ENCODE measurements at regions of chr13 and their contacts with region 1.

Region 1: GRCh38 chr13:40789275-40790133 is at the start of gene SLC25A15:
- DNase-seq: peak; percentile 47 to 82 (median 72)
- ATAC-seq: peak; percentile 86 to 92
- H3K4me3 Mint-ChIP-seq: peak within 1 kb of the TSS; percentile 55 to 90 (median 85)
- H3K27ac Mint-ChIP-seq: peak within 1 kb of the TSS; percentile 40 to 95 (median 88)
- H3K4me1 Mint-ChIP-seq: peaks cover 6 to 51% (median 36%) of the 10 kb centered on the region in 4 donors
- H3K27me3 Mint-ChIP-seq: no peaks in the 10 kb centered on the region
- polyA plus RNA-seq, gene SLC25A15: 5.3 to 12.1 (median 10.2) TPM

Region 2: DNA sequence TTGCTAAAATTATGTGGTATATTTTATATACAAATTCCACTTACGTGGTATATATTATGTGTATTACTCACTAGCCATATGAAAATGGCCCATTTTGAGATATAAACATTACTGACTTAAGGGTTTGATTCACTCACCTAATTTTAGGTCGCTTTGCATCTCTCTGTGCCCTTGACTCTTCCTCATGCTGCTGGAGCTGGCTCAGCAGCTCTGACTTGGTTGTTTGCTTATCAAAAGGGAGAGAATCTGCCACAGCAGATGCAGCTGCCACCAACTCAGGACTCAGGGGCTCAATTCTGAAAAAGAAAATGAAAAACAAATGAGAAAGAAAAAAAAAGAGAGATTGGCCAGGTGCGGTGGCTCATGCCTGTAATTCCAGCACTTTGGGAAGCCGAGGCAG is 30.7 kb before region 1 on chr13:
- POLR2A ChIA-PET with region 1: no interaction called
- DNase-seq: no peak
- ATAC-seq: no peak
- H3K4me3 Mint-ChIP-seq: no peak overlapping the region
- H3K27ac Mint-ChIP-seq: no peak overlapping the region
- H3K4me1 Mint-ChIP-seq: peaks cover 9 to 27% (median 17%) of the 10 kb centered on the region in 4 donors
- H3K27me3 Mint-ChIP-seq: no peaks in the 10 kb centered on the region

Region 3: DNA sequence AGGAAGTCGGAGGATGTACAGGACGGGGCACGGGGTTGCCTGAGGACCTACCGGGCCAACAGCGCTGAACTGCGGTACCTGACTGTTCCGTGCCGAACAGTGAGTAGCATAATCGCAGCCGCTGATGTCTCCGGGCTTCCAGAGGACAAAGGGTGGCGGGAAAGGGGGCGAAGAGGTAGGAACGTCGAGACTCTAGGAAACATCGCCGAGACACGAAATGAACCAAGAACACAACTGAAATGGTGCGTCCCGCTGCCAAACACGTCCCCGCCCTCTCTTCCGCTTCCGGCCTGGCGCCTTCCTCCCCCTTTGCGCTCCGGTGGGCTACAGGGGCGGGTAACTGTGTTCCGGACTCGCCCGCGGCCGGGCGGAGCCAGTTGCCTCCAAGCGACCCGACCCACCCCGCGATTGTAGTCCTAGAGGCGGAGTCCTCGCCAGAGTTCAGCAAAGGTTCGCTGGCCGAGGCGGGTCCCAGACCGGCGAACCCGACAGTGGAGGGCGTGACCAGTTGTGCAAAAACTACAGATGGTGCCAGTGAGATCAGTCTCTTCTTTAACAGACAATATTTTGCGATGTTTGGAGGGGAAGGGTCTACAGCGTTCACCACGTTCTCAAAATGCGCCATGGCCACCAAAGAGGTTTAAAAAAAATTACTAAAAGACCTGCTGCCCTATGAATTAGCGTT is 18.4 kb before region 1 on chr13 and contains the start of gene MRPS31:
- POLR2A ChIA-PET with region 1: interaction called, 26 read pairs
- DNase-seq: peak; percentile 87 to 96 (median 93)
- ATAC-seq: peak; percentile 94 to 98
- H3K4me3 Mint-ChIP-seq: peak within 1 kb of the TSS; percentile 96 to 100 (median 98)
- H3K27ac Mint-ChIP-seq: peak within 1 kb of the TSS; percentile 92 to 99 (median 98)
- H3K4me1 Mint-ChIP-seq: peaks cover 10 to 47% (median 28%) of the 10 kb centered on the region in 4 donors
- H3K27me3 Mint-ChIP-seq: no peaks in the 10 kb centered on the region
- polyA plus RNA-seq, gene MRPS31: 48.8 to 60.2 (median 57.8) TPM

Region 4: DNA sequence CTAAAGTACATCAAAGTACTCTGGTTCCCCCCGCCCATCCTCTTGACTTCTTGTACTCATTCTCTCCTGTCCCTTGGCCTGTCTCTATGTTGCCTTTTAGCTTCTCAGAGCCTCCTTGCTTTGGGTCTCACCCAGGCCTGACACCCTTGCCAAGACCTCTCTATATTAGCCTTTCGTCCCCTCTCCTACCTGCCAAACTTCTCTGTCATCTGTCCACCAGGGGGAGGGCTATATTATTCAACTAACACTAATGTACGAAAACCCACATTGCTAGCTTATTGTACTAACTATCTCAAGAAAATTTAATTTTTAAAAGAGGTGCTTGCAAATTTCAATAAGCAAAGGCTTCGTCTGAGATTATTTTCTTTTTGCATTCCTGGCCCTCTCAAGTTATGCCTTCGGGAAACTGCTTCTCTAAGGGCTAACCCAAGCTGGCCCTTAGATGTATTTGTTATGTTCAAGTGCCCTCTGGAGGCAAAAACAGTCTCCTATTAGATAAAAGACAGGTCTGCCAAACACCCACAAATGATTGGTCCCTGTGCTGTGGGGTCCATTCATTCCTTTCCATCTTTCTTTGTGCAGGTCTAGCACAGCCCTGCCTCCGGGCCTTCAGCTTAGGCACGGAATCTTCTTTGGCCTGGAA is 12.2 kb before region 1 on chr13:
- POLR2A ChIA-PET with region 1: interaction called, 25 read pairs
- DNase-seq: peak in 5 of 10 donors; percentile 24 to 62 (median 43)
- ATAC-seq: peak; percentile 57 to 71
- H3K4me3 Mint-ChIP-seq: peak overlapping the region; percentile 69 to 88 (median 85)
- H3K27ac Mint-ChIP-seq: peak overlapping the region; percentile 87 to 99 (median 97)
- H3K4me1 Mint-ChIP-seq: peaks cover 18 to 39% (median 36%) of the 10 kb centered on the region in 4 donors
- H3K27me3 Mint-ChIP-seq: no peaks in the 10 kb centered on the region